Naive thymus-derived CD4-positive, alpha-beta T cell (primary cell): ENCODE measurements at regions of chr4 and their contacts with region 1.

Region 1: DNA sequence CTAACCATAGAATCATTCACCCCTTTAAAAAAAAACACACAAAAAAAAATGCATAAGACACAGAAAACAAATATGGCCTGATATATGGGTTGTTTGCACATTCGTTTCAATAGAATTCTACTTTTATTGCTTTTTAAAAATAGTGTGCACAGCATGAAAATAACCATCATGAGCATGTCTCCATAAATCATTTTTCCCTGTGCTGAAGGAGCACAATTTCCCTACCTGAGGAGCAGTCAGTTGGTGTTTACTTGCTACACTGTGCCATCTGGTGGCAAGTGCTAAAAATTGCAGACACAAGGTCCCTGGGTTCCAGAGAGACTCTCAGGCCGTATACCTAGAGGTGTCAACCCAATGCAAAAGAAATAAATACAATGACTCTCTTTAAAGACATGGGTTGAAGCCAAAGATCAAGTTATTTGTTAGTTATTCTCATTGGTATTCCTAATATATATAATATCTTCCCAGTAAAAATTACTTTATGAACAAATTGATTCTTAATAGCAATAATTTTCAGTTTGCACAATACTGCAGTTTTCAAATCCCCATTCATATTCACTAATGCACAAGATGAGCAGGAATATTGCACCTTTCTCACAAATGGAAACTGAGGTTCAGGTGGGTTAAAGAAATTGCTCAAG is 551.4 kb downstream of the IQCM start:
- DNase-seq: peak in 2 of 9 donors; percentile 5 to 14
- ATAC-seq: no peak
- H3K4me3 ChIP-seq: no peak overlapping the region
- H3K4me3 Mint-ChIP-seq: no peak overlapping the region
- H3K27ac ChIP-seq: no peak overlapping the region
- H3K27ac Mint-ChIP-seq: no peak overlapping the region
- H3K4me1 ChIP-seq: no peaks in the 10 kb centered on the region
- H3K4me1 Mint-ChIP-seq: no peaks in the 10 kb centered on the region
- H3K27me3 ChIP-seq: no peaks in the 10 kb centered on the region
- H3K27me3 Mint-ChIP-seq: peaks cover 0 to 6% (median 0%) of the 10 kb centered on the region in 5 donors

Region 2: DNA sequence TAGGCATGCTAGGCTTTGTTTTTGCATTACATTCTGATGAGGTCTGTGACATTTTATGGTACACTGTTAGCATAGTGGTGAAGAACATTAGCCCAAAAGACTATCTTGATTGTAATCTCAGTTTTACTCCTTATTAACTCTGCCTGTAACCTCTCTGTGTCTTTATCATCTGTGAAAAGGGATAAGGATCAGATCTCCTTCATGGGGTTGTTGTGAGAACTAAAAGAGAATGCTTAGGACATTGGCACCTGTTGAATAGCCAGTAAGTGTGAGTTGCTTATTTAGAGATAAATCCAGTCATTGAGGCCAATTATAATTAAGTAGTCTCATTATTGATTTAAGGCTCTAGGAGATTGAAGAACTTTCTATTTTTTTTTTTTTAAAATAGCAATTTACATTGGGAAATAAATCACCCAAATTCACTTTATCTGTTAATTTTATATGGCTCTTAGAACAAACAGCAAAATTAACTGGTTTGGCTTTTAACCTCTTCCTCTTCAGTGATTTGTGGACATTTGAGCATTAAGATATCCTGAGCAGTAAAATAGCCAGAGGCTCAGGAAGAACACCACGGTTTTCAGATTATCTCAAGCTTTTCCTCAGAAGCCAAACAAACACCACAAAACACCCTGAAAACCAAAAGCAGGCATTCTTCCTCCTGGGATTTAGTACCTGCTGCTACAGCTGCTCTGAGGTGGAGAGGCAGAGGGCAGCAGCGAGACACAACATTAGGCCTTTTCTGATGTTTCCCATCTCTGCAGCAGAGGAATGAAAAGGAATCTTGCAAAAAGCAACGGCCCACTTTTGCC is 1339.4 kb before region 1 on chr4:
- CTCF ChIA-PET with region 1: no interaction called
- POLR2A ChIA-PET with region 1: no interaction called
- intact Hi-C with region 1: loop called in 1 of 2 experiments (anchors 10 kb)
- DNase-seq: peak in 1 of 9 donors; percentile 10
- ATAC-seq: no peak
- H3K4me3 ChIP-seq: no peak overlapping the region
- H3K4me3 Mint-ChIP-seq: no peak overlapping the region
- H3K27ac ChIP-seq: no peak overlapping the region
- H3K27ac Mint-ChIP-seq: no peak overlapping the region
- H3K4me1 ChIP-seq: no peaks in the 10 kb centered on the region
- H3K4me1 Mint-ChIP-seq: no peaks in the 10 kb centered on the region
- H3K27me3 ChIP-seq: no peaks in the 10 kb centered on the region
- H3K27me3 Mint-ChIP-seq: no peaks in the 10 kb centered on the region

Region 3: DNA sequence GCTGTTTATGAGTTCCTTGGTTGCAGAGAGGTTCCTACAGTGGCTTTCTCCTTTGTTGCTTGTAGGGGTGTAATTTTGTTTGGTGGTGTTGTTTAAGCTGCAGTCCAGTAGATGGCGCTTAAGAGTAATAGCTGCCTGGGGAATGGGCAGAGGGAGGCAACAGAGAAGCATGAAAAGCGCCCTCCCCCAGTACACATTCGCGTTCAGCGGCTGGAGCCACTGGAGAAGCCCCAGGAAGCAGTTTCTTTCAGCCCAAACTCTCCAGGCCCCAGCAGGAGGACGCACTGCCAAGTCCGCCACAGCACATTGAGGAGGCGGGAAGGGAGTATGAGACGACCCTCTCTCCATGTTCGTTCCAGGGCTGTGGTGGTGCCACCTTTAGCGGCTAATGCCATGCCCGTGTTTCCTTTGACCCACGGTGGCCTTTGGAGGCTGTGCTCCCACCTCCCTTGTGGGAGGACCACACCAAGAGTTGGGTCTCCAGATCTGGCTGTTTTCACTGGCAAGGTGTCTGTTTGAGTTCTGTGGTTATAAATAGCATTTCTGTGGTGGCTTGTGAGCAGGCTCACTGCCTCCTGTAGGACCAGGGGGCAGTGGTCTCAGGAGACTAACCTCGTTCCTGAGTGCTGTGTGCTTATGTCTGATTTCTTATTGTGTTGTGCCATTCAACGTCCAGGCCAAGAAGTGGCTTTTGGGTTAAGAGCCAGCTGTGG is 1280.0 kb before region 1 on chr4:
- CTCF ChIA-PET with region 1: no interaction called
- POLR2A ChIA-PET with region 1: no interaction called
- intact Hi-C with region 1: loop called in 1 of 2 experiments (anchors 5 kb)
- DNase-seq: peak in 5 of 9 donors; percentile 7 to 30 (median 9)
- ATAC-seq: peak; percentile 60
- H3K4me3 ChIP-seq: no peak overlapping the region
- H3K4me3 Mint-ChIP-seq: no peak overlapping the region
- H3K27ac ChIP-seq: no peak overlapping the region
- H3K27ac Mint-ChIP-seq: no peak overlapping the region
- H3K4me1 ChIP-seq: peaks cover 0 to 4% of the 10 kb centered on the region in 2 donors
- H3K4me1 Mint-ChIP-seq: peaks cover 0 to 12% (median 0%) of the 10 kb centered on the region in 7 donors
- H3K27me3 ChIP-seq: no peaks in the 10 kb centered on the region
- H3K27me3 Mint-ChIP-seq: no peaks in the 10 kb centered on the region

Region 4: DNA sequence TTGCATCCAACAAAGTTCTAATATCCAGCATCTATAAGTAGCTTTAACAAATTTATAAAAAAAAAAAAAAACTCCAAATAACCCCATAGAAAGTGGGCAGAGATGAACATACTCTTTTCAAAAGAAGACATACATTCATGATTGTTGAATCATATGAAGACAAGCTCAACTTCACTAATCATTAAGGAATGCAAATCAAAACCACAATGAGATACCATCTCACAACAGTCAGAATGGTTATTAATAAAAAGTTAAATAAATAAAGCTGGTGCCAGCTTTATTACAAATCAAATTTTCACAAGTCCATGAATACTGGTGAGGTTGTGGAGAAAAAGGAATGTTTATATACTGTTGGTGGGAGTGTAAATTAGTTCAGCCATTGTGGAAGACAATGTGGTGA is 40.6 kb before region 1 on chr4:
- CTCF ChIA-PET with region 1: no interaction called
- POLR2A ChIA-PET with region 1: no interaction called
- intact Hi-C with region 1: no loop called
- DNase-seq: no peak
- ATAC-seq: no peak
- H3K4me3 ChIP-seq: no peak overlapping the region
- H3K4me3 Mint-ChIP-seq: no peak overlapping the region
- H3K27ac ChIP-seq: no peak overlapping the region
- H3K27ac Mint-ChIP-seq: no peak overlapping the region
- H3K4me1 ChIP-seq: no peaks in the 10 kb centered on the region
- H3K4me1 Mint-ChIP-seq: no peaks in the 10 kb centered on the region
- H3K27me3 ChIP-seq: no peaks in the 10 kb centered on the region
- H3K27me3 Mint-ChIP-seq: no peaks in the 10 kb centered on the region